Activated CD4-positive, alpha-beta T cell treated with anti-CD3 and anti-CD28 coated beads for 36 hours (primary cell): ENCODE measurements at regions of chr7 and their contacts with region 1.

Region 1: GRCh38 chr7:87876040-87876868 is at the starts of genes DBF4 and SLC25A40:
- DNase-seq: peak; percentile 97
- ATAC-seq: peak; percentile 91
- H3K4me3 Mint-ChIP-seq: peak within 1 kb of the TSS; percentile 82
- H3K27ac Mint-ChIP-seq: peak within 1 kb of the TSS; percentile 93
- H3K4me1 Mint-ChIP-seq: peaks cover 48% of the 10 kb centered on the region
- H3K27me3 Mint-ChIP-seq: no peaks in the 10 kb centered on the region
- total RNA-seq, gene DBF4: 68.6 to 86.4 TPM
- total RNA-seq, gene SLC25A40: 38.0 to 41.9 TPM

Region 2: GRCh38 chr7:87219545-87220025 is 656.7 kb before region 1 on chr7 and contains the start of gene TMEM243:
- CTCF ChIA-PET with region 1: no interaction called
- POLR2A ChIA-PET with region 1: no interaction called
- intact Hi-C with region 1: loop called (anchors 1 to 2 kb)
- DNase-seq: peak; percentile 91
- ATAC-seq: peak; percentile 47
- H3K4me3 Mint-ChIP-seq: peak within 1 kb of the TSS; percentile 97
- H3K27ac Mint-ChIP-seq: peak within 1 kb of the TSS; percentile 98
- H3K4me1 Mint-ChIP-seq: peaks cover 33% of the 10 kb centered on the region
- H3K27me3 Mint-ChIP-seq: peaks cover 3% of the 10 kb centered on the region
- total RNA-seq, gene TMEM243: 44.1 to 46.9 TPM

Region 3: GRCh38 chr7:87345166-87345927 is 530.9 kb before region 1 on chr7 and contains the start of gene CROT:
- CTCF ChIA-PET with region 1: no interaction called
- POLR2A ChIA-PET with region 1: no interaction called
- intact Hi-C with region 1: loop called (anchors 1 kb)
- DNase-seq: peak; percentile 97
- ATAC-seq: peak; percentile 98
- H3K4me3 Mint-ChIP-seq: peak within 1 kb of the TSS; percentile 94
- H3K27ac Mint-ChIP-seq: peak within 1 kb of the TSS; percentile 95
- H3K4me1 Mint-ChIP-seq: peaks cover 45% of the 10 kb centered on the region
- H3K27me3 Mint-ChIP-seq: no peaks in the 10 kb centered on the region
- total RNA-seq, gene CROT: 4.6 to 7.0 TPM

Region 4: GRCh38 chr7:87853237-87853864 is 22.9 kb before region 1 on chr7:
- CTCF ChIA-PET with region 1: no interaction called
- POLR2A ChIA-PET with region 1: no interaction called
- intact Hi-C with region 1: loop called in 1 of 2 experiments (anchors 2 kb)
- DNase-seq: no peak
- ATAC-seq: peak; percentile 66
- H3K4me3 Mint-ChIP-seq: no peak overlapping the region
- H3K27ac Mint-ChIP-seq: no peak overlapping the region
- H3K4me1 Mint-ChIP-seq: peaks cover 13% of the 10 kb centered on the region
- H3K27me3 Mint-ChIP-seq: no peaks in the 10 kb centered on the region

Region 5: GRCh38 chr7:88219781-88220747 is 343.8 kb after region 1 on chr7 and contains the start of gene SRI:
- CTCF ChIA-PET with region 1: no interaction called
- POLR2A ChIA-PET with region 1: no interaction called
- intact Hi-C with region 1: loop called (anchors 1 to 2 kb)
- DNase-seq: peak; percentile 94
- ATAC-seq: peak; percentile 97
- H3K4me3 Mint-ChIP-seq: peak within 1 kb of the TSS; percentile 95
- H3K27ac Mint-ChIP-seq: peak within 1 kb of the TSS; percentile 95
- H3K4me1 Mint-ChIP-seq: peaks cover 24% of the 10 kb centered on the region
- H3K27me3 Mint-ChIP-seq: no peaks in the 10 kb centered on the region
- total RNA-seq, gene SRI: 157 to 193 TPM

Region 6: GRCh38 chr7:88686468-88687229 is 810.4 kb after region 1 on chr7:
- CTCF ChIA-PET with region 1: no interaction called
- POLR2A ChIA-PET with region 1: no interaction called
- intact Hi-C with region 1: no loop called
- DNase-seq: no peak
- ATAC-seq: no peak
- H3K4me3 Mint-ChIP-seq: no peak overlapping the region
- H3K27ac Mint-ChIP-seq: no peak overlapping the region
- H3K4me1 Mint-ChIP-seq: no peaks in the 10 kb centered on the region
- H3K27me3 Mint-ChIP-seq: no peaks in the 10 kb centered on the region